Panc1 (cell line): ENCODE measurements at regions of chr7 and their contacts with region 1.

Region 1: GRCh38 chr7:50418086-50418515 is 32.0 kb downstream of the FIGNL1 start:
- DNase-seq: peak; percentile 73
- ATAC-seq: peak; percentile 100
- H3K4me3 ChIP-seq: no peak overlapping the region
- H3K27ac ChIP-seq: no peak overlapping the region
- H3K4me1 ChIP-seq: no peaks in the 10 kb centered on the region
- H3K27me3 ChIP-seq: no peaks in the 10 kb centered on the region
- CTCF ChIP-seq: peak; percentile 98

Region 2: GRCh38 chr7:50092579-50093491 is 325.3 kb before region 1 on chr7 and contains the start of gene ZPBP:
- CTCF ChIA-PET with region 1: interaction called, 3 read pairs
- POLR2A ChIA-PET with region 1: no interaction called
- in situ Hi-C with region 1: no loop called
- intact Hi-C with region 1: loop called (anchors 2 kb)
- DNase-seq: peak; percentile 41
- ATAC-seq: no peak; the same call in 1 of the 2 replicates
- H3K4me3 ChIP-seq: no peak within 1 kb of the TSS
- H3K27ac ChIP-seq: no peak within 1 kb of the TSS
- H3K4me1 ChIP-seq: no peaks in the 10 kb centered on the region
- H3K27me3 ChIP-seq: peaks cover 13% of the 10 kb centered on the region
- CTCF ChIP-seq: peak; percentile 84
- total RNA-seq, gene ZPBP: not detected

Region 3: DNA sequence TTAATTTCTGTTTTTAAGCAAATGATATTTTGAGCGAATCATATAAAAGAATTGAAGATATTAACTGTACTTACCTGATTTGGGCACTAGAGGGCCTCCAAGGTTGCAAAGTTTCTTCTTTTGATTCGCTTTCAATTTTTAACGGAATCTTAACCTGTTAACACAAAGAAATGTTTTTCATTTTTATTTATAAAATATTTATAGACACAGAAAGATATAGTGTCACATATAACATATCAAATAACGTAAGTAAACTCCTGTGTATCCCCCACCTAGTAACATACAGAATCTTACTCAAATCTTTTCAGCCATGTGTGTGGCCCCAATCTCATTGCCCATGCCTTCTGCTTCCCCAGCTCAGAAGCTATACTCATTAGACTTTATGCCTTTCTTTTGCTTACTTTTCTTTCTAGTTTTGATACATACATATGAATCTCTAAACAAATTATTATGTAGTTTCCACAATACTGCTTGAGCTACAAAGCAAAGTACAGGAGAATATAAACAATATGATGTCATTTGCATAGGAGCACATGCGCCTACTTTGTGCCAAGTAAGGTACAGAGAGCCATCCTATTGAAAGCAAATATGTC is 275.6 kb before region 1 on chr7:
- CTCF ChIA-PET with region 1: no interaction called
- POLR2A ChIA-PET with region 1: no interaction called
- in situ Hi-C with region 1: no loop called
- intact Hi-C with region 1: loop called (anchors 2 kb)
- DNase-seq: no peak
- ATAC-seq: no peak; the same call in 1 of the 2 replicates
- H3K4me3 ChIP-seq: no peak overlapping the region
- H3K27ac ChIP-seq: no peak overlapping the region
- H3K4me1 ChIP-seq: no peaks in the 10 kb centered on the region
- H3K27me3 ChIP-seq: 0 out of 2 replicates have a peak, but pooled peaks cover 2% of the 10 kb centered on the region
- CTCF ChIP-seq: peak; percentile 82; the same call in 1 of the 2 replicates

Region 4: GRCh38 chr7:50206453-50207250 is 211.4 kb before region 1 on chr7:
- CTCF ChIA-PET with region 1: interaction called, 23 read pairs
- POLR2A ChIA-PET with region 1: no interaction called
- in situ Hi-C with region 1: no loop called
- intact Hi-C with region 1: loop called (anchors 2 kb)
- DNase-seq: no peak
- ATAC-seq: no peak
- H3K4me3 ChIP-seq: no peak overlapping the region
- H3K27ac ChIP-seq: no peak overlapping the region
- H3K4me1 ChIP-seq: no peaks in the 10 kb centered on the region
- H3K27me3 ChIP-seq: no peaks in the 10 kb centered on the region; the same call in 1 of the 2 replicates
- CTCF ChIP-seq: no peak